ENCODE measurements at regions of chr13 and their contacts with region 1.

Region 1: GRCh38 chr13:20969182-20969581 is 66.6 kb upstream of the XPO4 start:
- DNase-seq: no peak
- H3K4me3 ChIP-seq: no peak overlapping the region
- H3K27ac ChIP-seq: no peak overlapping the region
- H3K4me1 ChIP-seq: no peaks in the 10 kb centered on the region
- H3K27me3 ChIP-seq: no peaks in the 10 kb centered on the region
- CTCF ChIP-seq: no peak
- POLR2A ChIP-seq: no peak

Region 2: GRCh38 chr13:20980430-20980829 is 11.2 kb after region 1 on chr13:
- intact Hi-C with region 1: no loop called
- DNase-seq: no peak
- H3K4me3 ChIP-seq: no peak overlapping the region
- H3K27ac ChIP-seq: no peak overlapping the region
- H3K4me1 ChIP-seq: no peaks in the 10 kb centered on the region
- H3K27me3 ChIP-seq: no peaks in the 10 kb centered on the region
- CTCF ChIP-seq: no peak
- POLR2A ChIP-seq: no peak

Region 3: DNA sequence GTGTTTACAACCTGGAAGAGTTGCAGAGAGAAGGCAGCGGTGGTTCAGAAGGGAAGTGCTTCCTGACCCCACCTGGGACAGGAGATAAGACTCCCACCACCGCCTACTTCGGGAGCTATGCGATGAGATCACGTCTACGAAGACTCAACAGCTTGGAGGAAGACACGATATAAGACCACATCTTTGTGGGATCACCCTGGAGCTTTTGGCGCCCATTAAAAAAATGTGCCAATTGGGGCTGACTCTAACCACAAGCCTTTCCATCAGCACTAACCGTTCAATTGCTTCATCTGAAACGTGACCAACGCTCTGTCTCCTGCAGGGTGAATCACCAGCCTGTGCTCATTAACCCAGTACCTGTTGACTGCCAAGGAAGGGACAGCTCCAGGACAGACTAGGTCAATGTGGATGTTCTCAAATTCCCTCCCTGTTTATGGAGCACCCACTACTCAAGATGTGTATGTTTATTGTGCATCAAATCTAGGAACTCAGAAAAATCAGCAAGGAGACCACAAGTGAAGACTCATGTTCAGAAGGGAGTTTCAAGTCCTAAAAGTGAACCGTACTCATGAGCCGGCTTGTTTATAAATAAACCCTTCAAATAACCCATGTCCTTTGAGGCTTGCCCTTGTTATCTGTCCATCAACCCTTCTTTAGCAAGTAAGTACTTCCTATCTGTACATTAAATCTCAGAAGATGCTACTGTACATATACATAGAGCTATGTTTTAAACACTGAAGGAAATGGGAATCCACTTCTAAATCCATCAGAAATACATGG is 24.7 kb after region 1 on chr13:
- intact Hi-C with region 1: no loop called
- DNase-seq: no peak
- H3K4me3 ChIP-seq: no peak overlapping the region
- H3K27ac ChIP-seq: peak overlapping the region in 1 of 2 donors; percentile 7
- H3K4me1 ChIP-seq: no peaks in the 10 kb centered on the region
- H3K27me3 ChIP-seq: no peaks in the 10 kb centered on the region
- CTCF ChIP-seq: no peak
- POLR2A ChIP-seq: no peak

Region 4: GRCh38 chr13:21006141-21007005 is 37.2 kb after region 1 on chr13:
- intact Hi-C with region 1: loop called (anchors 5 kb)
- DNase-seq: no peak
- H3K4me3 ChIP-seq: peak overlapping the region in 1 of 3 donors; percentile 13
- H3K27ac ChIP-seq: peak overlapping the region in 1 of 2 donors; percentile 35
- H3K4me1 ChIP-seq: no peaks in the 10 kb centered on the region
- H3K27me3 ChIP-seq: no peaks in the 10 kb centered on the region
- CTCF ChIP-seq: no peak
- POLR2A ChIP-seq: no peak

Region 5: DNA sequence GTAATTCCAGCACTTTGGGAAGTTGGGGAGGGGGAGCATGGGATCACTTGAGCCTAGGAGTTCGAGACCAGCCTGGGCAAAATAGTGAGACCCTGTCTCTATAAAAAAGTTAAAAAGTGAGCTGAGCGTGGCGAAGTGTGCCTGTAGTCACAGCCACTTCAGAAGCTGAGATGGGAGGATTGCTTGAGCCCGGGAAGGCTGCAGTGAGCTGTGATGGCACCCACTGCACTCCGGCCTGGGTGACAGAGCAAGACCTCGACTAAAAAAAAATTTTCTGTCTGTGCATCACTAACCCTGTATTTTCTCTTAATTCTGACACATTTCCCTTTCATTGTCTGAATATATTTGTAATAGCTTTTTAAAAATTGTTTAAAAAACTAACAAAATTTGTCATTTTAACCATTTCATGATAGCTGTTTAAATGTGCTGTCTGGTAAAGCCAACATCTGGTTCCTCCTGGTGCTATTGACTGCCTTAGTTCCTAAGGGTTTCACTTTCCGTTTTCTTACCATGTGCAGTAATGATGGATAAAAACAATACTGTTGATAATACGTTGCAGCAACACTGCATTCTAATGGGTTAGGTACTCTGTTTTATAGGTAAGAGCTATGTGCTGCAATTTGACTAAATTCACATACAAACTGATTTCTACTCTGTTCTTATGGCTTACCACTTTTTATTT is 62.6 kb after region 1 on chr13:
- intact Hi-C with region 1: loop called (anchors 2 kb)
- DNase-seq: no peak
- H3K4me3 ChIP-seq: no peak overlapping the region
- H3K27ac ChIP-seq: peak overlapping the region in 1 of 2 donors; percentile 87
- H3K4me1 ChIP-seq: peaks cover 9 to 16% of the 10 kb centered on the region in 2 donors
- H3K27me3 ChIP-seq: no peaks in the 10 kb centered on the region
- CTCF ChIP-seq: no peak
- POLR2A ChIP-seq: no peak